ENCODE measurements at regions of chr2 and their contacts with region 1.

Region 1: DNA sequence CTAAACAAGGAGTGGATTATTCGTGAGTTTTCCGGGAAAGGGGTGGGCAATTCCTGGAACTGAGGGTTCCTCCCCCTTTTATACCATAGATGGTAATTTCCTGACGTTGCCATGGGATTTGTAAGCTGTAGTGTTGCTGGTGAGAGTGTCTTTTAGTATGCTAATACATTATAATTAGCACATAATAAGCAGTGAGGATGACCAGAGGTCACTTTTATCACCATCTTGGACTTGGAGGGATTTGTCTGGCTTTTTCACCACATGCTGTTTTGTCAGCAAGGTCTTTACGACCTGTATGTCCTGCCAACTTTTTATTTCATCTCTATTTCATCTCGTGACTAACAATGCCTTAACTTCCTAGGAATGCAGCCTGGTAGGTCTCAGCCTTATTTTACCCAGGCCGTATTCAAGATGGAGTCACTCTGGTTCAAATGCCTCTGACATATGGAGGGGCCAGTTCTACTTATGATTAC is 124.8 kb upstream of the B3GNT2 start:
- DNase-seq: no peak

Region 2: DNA sequence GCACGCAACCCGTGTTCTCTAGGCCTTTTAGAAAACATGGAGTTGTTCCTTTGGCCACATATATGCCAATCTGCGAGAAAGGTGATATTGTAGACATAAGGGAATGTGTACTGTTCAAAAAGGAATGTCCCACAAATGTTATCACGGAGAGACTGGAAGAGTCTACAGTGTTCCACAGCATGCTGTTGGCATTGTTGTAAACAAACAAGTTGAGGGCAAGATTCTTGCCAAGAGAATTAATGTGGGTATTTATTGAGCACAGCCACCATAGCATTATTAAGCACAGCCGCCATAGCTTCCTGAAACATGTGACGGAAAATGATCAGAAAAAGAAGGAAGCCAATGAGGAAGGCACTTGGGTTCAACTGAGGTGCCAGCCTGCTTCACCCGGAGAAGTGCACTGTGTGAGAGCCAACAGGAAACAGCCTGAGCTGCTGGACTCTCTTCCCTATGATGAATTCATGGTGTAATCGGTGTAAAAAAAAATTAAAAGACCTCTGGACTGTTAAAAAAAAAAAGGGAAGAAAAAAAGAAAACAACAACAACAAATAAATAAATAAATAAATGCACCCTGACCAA is 1218.8 kb before region 1 on chr2:
- intact Hi-C with region 1: no loop called
- DNase-seq: no peak

Region 3: GRCh38 chr2:62089658-62090057 is 18.5 kb after region 1 on chr2:
- intact Hi-C with region 1: loop called in 1 of 2 experiments (anchors 1 kb)
- DNase-seq: no peak

Region 4: DNA sequence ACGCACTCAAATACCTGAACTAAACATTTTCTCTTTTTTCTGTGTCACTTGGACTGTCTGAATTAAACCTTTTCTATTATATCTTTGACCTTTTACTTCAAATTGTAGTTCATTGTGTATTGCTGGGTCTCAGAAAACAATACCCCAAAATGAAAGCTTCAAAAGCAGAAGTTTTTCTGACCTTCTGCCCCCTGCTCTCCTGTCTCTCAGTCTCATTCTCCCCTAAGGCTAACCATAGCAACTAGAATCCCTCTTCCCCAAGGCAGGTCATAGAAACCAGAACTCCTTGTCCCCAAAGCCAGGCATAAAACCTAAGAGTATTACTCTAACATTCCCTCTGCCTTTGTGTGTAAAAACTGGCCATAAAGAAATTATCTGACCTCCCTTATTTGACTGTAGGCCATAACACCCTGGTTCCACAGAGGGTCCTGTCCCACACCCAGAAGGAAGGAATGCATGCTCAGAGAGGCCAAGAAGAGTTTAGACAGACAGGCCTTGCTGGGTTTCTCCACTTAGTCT is 31.3 kb after region 1 on chr2:
- intact Hi-C with region 1: loop called in 1 of 2 experiments (anchors 1 kb)
- DNase-seq: no peak

Region 5: DNA sequence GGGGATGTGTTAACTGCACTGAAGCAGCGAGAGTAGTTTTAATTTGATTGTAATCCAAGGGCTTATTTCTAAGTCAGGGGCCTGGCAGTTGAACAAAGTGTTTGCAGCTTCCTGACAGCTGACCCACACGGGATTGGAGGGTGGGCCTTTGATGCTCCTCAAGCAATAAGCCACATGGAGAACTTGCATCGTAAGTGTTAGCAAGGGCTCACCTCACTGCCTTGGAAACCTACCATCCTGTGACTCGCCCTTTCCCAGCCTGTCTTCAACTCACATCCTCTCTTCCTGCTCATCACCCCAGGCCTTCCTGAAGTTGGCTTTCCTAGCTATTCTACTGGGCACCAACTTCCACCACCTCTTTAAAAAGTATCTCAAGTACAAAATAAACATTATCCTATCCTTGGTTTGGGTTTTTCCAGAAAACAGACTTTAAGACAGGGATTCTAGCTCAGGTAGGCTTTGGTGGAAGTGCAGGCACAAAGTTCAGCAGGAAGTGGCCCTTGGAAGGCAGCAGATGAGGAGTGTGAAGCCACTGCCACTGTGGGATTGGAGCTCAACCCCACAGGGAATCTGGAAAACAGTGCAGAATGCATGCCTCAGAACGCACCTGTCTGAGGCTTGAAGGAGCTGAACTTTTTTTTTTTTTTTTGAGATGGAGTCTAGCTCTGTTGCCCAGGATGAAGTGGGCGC is 156.4 kb after region 1 on chr2:
- intact Hi-C with region 1: no loop called
- DNase-seq: no peak

Measured in posterior vena cava (tissue), 2 donors.